ENCODE measurements at regions of chr22 and their contacts with region 1.

Region 1: DNA sequence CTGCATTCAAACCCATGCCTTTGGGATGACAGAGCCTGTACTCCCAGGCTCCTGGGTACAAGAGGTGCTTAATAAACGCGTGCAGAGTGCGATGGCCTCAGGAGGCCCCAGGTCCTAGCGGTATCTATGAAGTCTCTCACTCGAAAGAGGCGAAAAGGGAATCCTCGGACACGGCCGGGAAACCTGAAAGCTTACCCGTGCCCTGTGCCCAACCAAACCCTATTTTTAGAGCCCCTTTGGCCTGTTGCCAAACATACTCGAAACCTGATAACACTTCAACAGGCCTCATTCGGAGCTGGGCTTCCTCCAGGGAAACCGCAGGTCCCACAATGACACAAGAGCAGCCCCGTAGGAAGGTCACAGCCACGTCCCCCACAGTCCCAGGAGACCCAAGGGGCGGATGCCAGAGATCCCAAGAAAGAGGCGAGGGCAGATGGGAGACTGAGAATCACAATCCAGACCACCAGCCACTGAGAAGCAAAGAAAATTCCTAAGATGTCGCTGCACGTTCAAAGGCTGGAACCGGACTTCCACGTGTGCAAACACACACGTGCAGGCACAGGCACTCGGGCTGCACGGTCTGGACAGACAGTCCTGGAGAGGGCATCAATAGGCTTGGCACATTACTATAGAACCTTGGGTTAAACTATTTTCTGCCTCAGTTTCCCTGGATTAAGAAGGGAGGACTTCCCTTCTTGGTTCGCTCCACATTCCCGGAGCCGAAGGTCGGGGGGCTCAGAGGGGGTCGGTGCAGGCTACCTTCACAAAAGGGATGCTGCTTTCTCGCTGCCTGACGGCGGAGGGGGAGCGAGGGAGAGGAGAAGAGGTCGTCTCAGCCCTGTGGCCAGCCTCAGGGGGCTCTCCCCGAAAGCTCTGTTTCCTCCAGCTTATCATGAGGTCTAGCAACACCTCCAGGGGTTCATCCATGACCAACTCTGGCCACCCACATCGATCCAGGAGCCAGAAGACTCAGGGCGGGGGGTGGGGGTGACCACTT is 8.2 kb downstream of the PDGFB start:
- DNase-seq: peak; percentile 88

Region 2: DNA sequence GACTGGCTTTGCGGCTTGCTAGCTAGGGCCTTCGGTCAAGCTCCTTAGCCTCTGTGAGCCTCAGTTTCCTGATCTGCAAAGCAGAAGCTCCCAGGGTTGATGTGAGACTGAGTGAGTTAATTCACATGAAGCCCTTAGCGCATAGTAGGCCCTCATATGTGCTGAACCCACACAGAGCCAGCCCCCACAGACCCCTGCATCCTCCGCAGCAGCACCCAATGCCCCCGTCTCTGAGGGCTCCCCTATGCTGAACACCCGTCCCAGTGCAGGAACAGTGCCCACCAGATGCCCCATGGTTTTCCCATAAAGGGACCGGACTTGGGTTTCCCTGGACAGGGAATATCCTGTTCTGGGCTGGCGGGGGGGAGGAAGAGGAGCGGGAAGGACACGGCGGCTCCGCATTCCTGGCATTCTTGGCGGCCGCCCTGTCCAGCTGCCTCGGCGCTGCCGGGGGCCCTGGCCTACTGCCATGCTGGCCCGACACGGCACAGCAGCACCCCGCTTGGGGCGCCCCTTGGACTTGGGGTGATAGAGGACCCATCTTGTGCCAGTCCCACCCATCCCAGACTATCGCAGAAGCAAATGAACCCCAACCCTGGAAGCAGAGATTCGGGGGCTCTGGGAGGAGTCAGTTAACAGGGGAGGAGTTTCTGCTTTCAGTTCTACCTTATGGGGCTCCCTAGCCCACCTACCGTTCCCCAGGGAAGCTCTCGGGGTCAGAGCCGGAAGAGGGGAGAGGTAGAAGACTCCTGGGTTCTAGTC is 60.5 kb before region 1 on chr22:
- intact Hi-C with region 1: loop called (anchors 2 kb)
- DNase-seq: peak; percentile 82

Region 3: DNA sequence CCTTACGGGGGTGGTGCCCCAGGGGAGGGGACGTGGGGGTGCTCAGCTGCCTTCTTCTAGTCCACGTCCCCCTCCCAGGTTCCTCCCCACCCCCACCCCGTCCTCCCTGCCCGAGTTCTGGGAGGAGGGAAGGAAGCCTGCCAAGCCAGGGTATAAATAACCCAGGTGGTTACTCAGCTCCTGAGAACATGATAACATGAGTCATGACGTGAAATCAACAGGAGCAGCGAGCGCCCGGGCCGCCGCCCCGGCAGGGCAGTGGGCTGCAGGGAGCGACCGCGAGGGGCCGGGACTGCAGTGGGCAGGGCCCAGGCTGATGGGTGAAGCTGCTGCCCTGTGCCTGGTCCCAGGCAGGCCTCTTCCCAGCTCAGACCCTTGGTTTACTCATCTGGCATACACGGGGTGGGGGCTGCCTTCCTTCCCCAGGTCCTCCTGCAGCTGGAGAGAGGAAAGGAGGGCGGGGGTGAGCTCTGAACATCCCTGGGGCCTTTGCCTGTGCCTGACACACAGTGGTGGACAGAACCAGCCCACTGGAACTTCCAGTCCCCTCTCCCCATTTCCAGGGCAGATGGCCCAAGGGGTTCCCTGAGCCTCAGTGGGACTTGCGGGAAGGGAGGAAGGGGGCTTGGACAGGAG is 16.9 kb after region 1 on chr22:
- intact Hi-C with region 1: loop called (anchors 1 kb)
- DNase-seq: peak; percentile 89

Region 4: GRCh38 chr22:39309881-39310714 is 73.5 kb after region 1 on chr22:
- intact Hi-C with region 1: loop called (anchors 5 kb)
- DNase-seq: no peak

Measured in cardiac septum (tissue), 1 donor.